ENCODE measurements at regions of chr10 and their contacts with region 1.

Region 1: DNA sequence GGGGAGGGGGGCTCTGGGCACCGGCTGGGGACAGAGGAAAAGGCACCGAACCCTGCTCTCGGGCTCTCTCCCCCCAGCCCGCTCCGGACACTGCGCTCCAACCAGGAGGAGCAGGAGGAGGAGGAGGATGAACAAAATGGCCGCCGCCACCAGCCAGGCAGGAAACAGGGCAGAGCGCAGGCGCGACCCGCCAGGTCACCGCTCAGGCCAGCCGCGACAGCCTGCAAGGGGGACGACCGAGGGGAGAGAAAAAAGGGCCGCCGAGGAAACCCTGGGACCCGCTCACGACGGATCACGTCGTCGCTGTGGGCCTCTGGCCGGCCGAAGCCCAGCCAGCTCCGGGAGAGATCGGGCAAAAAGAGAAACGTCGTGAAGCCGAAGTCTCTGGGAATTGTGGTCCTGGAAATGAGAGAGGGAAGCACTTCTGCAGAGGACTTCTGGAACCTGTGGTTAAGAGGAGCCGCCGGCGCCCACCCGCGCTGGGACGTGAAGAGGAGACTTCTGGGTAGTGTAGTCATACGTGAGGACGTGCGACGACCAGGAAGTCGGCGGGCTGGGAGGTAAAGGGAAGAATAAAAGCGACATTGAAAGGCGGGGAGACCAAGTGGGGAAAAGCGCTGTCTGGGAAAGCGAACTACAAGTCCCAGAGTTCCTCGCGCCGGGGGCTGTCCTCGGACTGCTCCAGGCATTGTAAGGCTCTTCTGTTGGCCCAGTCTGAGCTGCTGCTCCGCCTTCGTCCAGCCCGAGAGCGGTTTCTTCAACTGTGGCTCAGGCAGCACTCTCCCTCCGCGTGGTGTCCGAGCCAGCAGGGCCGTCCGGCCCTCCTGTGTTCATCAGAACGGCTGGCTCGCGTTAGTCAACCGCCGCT is at the start of gene TIAL1:
- DNase-seq: peak; percentile 89
- H3K4me3 Mint-ChIP-seq: peak within 1 kb of the TSS; percentile 95
- H3K27ac Mint-ChIP-seq: peak within 1 kb of the TSS; percentile 95
- H3K4me1 Mint-ChIP-seq: peaks cover 42% of the 10 kb centered on the region
- H3K27me3 Mint-ChIP-seq: no peaks in the 10 kb centered on the region
- total RNA-seq, gene TIAL1: 183 and 184 TPM in 2 replicates

Region 2: GRCh38 chr10:119139464-119140067 is 457.2 kb before region 1 on chr10:
- intact Hi-C with region 1: loop called (anchors 10 kb)
- DNase-seq: peak; percentile 41
- H3K4me3 Mint-ChIP-seq: no peak overlapping the region
- H3K27ac Mint-ChIP-seq: peak overlapping the region; percentile 1
- H3K4me1 Mint-ChIP-seq: peaks cover 18% of the 10 kb centered on the region
- H3K27me3 Mint-ChIP-seq: no peaks in the 10 kb centered on the region

Region 3: DNA sequence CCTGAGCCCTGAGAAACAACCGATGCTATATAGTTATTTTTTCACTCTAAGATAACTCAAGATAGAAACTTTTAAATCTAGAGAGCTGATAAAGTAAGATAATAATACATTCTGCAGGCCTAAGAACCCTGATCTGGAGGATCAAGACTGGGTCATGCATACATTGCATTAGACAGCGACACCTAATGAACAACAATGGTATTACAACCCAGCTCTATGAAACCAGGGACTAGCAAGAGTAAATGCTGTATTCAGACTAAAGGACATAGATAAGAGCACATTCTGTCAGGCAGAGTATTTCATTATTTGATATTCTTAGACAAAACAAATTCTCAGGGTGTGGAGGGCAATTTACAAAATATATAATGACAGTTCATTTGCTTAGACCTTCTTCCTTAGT is 240.8 kb before region 1 on chr10:
- intact Hi-C with region 1: no loop called
- DNase-seq: no peak
- H3K4me3 Mint-ChIP-seq: no peak overlapping the region
- H3K27ac Mint-ChIP-seq: no peak overlapping the region
- H3K4me1 Mint-ChIP-seq: peaks cover 15% of the 10 kb centered on the region
- H3K27me3 Mint-ChIP-seq: no peaks in the 10 kb centered on the region

Region 4: GRCh38 chr10:119461380-119461779 is 135.4 kb before region 1 on chr10:
- intact Hi-C with region 1: no loop called
- DNase-seq: no peak
- H3K4me3 Mint-ChIP-seq: no peak overlapping the region
- H3K27ac Mint-ChIP-seq: no peak overlapping the region
- H3K4me1 Mint-ChIP-seq: peaks cover 5% of the 10 kb centered on the region
- H3K27me3 Mint-ChIP-seq: no peaks in the 10 kb centered on the region

Region 5: GRCh38 chr10:119502209-119502608 is 94.6 kb before region 1 on chr10:
- intact Hi-C with region 1: loop called (anchors 5 kb)
- DNase-seq: peak; percentile 71
- H3K4me3 Mint-ChIP-seq: peak overlapping the region; percentile 53
- H3K27ac Mint-ChIP-seq: peak overlapping the region; percentile 83
- H3K4me1 Mint-ChIP-seq: peaks cover 74% of the 10 kb centered on the region
- H3K27me3 Mint-ChIP-seq: no peaks in the 10 kb centered on the region

Region 6: GRCh38 chr10:119550827-119551226 is 45.9 kb before region 1 on chr10:
- intact Hi-C with region 1: no loop called
- DNase-seq: no peak
- H3K4me3 Mint-ChIP-seq: no peak overlapping the region
- H3K27ac Mint-ChIP-seq: no peak overlapping the region
- H3K4me1 Mint-ChIP-seq: no peaks in the 10 kb centered on the region
- H3K27me3 Mint-ChIP-seq: peaks cover 39% of the 10 kb centered on the region

Region 7: GRCh38 chr10:119562097-119562496 is 34.7 kb before region 1 on chr10:
- intact Hi-C with region 1: no loop called
- DNase-seq: no peak
- H3K4me3 Mint-ChIP-seq: no peak overlapping the region
- H3K27ac Mint-ChIP-seq: no peak overlapping the region
- H3K4me1 Mint-ChIP-seq: no peaks in the 10 kb centered on the region
- H3K27me3 Mint-ChIP-seq: no peaks in the 10 kb centered on the region

Region 8: GRCh38 chr10:119575991-119576390 is 20.8 kb before region 1 on chr10:
- intact Hi-C with region 1: loop called (anchors 2 kb)
- DNase-seq: no peak
- H3K4me3 Mint-ChIP-seq: no peak overlapping the region
- H3K27ac Mint-ChIP-seq: peak overlapping the region; percentile 44
- H3K4me1 Mint-ChIP-seq: peaks cover 16% of the 10 kb centered on the region
- H3K27me3 Mint-ChIP-seq: no peaks in the 10 kb centered on the region

Region 9: GRCh38 chr10:119658253-119658673 is 61.5 kb after region 1 on chr10:
- intact Hi-C with region 1: loop called (anchors 1 kb)
- DNase-seq: no peak
- H3K4me3 Mint-ChIP-seq: no peak overlapping the region
- H3K27ac Mint-ChIP-seq: no peak overlapping the region
- H3K4me1 Mint-ChIP-seq: peaks cover 61% of the 10 kb centered on the region
- H3K27me3 Mint-ChIP-seq: no peaks in the 10 kb centered on the region

Region 10: GRCh38 chr10:119892188-119893065 is 295.7 kb after region 1 on chr10 and contains the start of gene SEC23IP:
- intact Hi-C with region 1: loop called (anchors 1 kb)
- DNase-seq: peak; percentile 92
- H3K4me3 Mint-ChIP-seq: peak within 1 kb of the TSS; percentile 99
- H3K27ac Mint-ChIP-seq: peak within 1 kb of the TSS; percentile 92
- H3K4me1 Mint-ChIP-seq: peaks cover 38% of the 10 kb centered on the region
- H3K27me3 Mint-ChIP-seq: peaks cover 6% of the 10 kb centered on the region
- total RNA-seq, gene SEC23IP: 85.9 and 87.4 TPM in 2 replicates